Right ventricle myocardium inferior (tissue), 1 donor: ENCODE measurements at regions of chr3 and their contacts with region 1.

Region 1: DNA sequence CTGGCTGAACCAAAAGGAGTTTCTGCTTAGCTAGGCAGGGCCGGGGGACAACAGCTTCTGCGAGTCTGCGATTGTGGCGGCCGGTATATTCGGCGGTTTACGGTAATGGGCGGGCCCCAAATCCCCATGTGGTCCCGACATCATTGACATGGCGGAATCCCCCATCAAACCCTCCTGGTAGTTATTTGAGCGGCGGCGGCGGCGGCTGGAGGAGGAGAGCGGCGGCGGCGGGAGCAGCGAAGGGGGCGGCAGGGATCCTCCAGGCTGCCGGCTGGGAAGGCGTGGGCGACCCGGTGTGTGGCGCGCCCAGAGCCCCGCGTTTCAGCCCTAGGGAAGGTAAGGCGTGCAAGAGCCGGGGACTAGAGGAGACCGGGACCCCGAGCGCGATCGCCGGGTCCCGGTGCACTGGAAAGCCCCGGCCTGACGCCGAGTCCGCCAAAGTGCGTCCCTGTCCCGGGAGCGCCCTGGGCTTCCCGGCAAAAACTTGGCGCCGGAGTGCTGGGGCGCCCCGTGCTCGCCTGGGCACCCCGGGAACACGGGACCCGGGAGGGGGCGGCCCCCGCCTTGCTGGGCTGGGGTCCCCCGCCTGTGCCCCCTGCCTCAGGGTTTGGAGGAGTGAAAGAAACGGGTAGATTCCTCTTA is at the start of gene FNDC3B:
- DNase-seq: peak; percentile 95
- ATAC-seq: peak; percentile 91
- total RNA-seq, gene FNDC3B: 57.8 TPM

Region 2: DNA sequence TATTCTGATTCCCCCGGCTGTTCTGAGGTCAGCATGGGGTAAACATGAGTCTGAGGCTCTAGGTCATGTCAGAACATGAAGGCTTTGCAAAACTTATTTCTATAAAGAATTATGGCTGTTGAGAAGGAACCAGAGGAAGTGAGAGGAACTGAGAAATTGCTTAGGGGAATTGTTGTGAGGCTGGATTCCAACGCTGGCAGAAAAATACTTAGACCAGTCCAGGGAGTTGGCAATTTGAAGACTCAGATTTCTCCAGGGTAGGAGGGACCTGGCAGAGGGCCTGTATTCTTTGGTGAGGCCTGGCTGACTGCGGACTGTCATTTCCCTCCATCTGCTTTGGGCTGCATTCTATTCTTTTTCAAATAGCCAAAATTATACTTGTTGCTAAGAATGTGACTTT is 384.7 kb before region 1 on chr3:
- intact Hi-C with region 1: loop called (anchors 10 kb)
- DNase-seq: no peak
- ATAC-seq: peak; percentile 96

Region 3: DNA sequence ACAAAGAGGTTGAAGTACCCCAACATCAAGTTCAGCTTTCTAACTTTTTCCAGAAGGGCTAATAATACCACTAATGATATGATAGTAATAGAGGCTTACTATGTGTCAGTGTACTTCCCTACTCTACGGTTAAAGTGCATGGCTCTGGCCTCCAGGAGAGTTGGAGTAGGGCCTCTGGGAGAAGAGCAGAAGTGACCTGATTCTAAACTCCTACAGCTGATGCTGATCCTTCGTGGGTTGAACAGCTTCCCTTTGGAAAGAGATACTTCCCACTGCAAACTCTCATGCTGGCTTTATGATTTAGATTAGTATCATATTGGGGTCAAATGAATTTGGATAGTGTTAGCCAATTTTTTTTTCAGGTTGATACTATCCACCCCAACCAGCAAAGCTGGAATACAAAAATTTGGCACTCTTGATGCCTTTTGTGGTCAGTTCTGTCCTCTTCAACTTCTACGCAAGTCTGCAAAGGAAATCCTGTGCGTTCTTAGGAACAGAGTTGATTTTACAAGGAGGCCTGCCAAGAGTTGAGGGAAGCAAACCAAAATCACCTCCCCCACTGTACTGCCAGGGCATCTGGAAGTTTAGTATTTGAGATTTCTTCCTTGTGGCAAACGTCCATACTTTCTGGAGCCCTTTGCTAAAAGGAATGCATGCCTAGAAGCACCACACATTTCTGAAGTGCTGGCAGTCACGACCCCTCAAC is 178.6 kb before region 1 on chr3:
- intact Hi-C with region 1: no loop called
- DNase-seq: no peak
- ATAC-seq: peak; percentile 70

Region 4: GRCh38 chr3:172094621-172095557 is 55.3 kb after region 1 on chr3:
- intact Hi-C with region 1: loop called (anchors 5 kb)
- DNase-seq: no peak
- ATAC-seq: no peak

Region 5: GRCh38 chr3:172142051-172142863 is 102.7 kb after region 1 on chr3:
- intact Hi-C with region 1: loop called (anchors 5 kb)
- DNase-seq: no peak
- ATAC-seq: no peak

Region 6: DNA sequence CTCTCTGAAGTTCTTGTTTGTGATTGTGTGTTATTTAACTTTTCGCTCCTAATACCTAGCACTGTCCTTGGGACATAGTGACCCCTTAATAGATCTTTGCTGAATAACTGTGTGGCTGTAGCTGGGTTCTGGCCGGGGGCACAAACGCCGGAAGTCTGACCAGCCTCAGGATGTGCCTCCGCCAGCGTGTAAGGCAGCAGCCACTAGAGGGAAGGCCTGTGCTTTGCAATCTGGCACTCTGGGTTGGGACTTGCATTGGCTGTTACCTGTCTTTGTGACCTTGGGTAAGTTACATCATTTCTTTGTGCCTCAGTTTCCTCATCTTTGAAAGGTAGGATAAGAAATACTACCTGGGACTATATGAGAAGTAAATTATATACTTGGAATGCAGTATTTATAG is 250.0 kb after region 1 on chr3:
- intact Hi-C with region 1: loop called (anchors 5 kb)
- DNase-seq: peak; percentile 65
- ATAC-seq: no peak

Region 7: GRCh38 chr3:172332256-172333041 is 292.9 kb after region 1 on chr3:
- intact Hi-C with region 1: loop called (anchors 5 kb)
- DNase-seq: no peak
- ATAC-seq: peak; percentile 84